ENCODE measurements at regions of chr17 and their contacts with region 1.

Region 1: GRCh38 chr17:794876-795275 is 12.7 kb downstream of the MRM3 start:
- DNase-seq: no peak
- H3K4me3 ChIP-seq: peak overlapping the region; percentile 3; the same call in 1 of the 2 replicates
- CTCF ChIP-seq: peak; percentile 79

Region 2: DNA sequence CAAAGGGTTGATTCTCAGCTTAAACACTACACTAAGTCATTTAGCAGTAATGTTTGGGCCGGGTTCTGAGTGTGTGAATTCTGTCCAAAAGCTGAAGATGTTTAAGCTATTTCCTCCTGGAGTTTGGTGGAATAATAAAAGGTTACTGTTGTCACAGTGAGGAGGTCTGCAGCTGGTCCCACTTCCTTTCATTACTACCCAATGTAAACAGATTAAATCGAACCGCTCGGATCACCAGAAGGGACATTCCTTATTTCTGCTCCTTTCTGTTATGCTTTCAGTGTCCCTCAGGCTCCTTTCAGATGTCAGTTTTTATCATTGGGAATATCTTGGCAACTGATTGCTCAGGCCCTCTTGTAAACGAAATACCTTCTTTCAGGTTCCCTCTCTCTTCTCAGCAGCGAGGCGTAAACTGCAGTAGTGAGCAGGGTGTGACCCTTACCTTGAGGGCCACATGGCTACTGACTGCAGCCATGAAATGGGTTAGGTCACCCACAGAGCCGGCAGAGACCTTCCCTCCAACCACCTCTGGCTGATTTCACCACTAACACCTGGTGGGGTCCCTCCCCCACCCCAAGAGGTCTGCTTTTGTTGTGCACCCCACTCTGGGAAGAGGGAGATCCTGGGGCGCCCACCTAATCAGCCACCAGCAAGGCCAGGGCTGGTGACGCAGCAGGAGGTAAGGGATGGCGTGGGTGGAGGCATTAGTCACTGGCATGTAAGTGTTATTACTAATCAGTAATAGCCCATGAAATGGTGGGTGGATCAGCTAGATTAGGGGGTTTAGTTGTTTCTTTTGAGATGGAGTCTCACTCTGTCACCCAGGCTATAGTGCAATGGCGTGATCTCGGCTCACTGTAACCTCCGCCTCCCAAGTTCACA is 197.9 kb before region 1 on chr17:
- CTCF ChIA-PET with region 1: no interaction called
- POLR2A ChIA-PET with region 1: no interaction called
- DNase-seq: no peak
- H3K4me3 ChIP-seq: no peak overlapping the region
- CTCF ChIP-seq: no peak

Region 3: GRCh38 chr17:781805-782731 is 12.8 kb before region 1 on chr17 and contains the starts of genes GLOD4 and MRM3:
- CTCF ChIA-PET with region 1: interaction called, 19 read pairs
- POLR2A ChIA-PET with region 1: no interaction called
- DNase-seq: no peak
- H3K4me3 ChIP-seq: peak within 1 kb of the TSS; percentile 98
- CTCF ChIP-seq: no peak

Region 4: GRCh38 chr17:823501-823902 is 28.6 kb after region 1 on chr17:
- CTCF ChIA-PET with region 1: no interaction called
- POLR2A ChIA-PET with region 1: no interaction called
- DNase-seq: no peak
- H3K4me3 ChIP-seq: no peak overlapping the region
- CTCF ChIP-seq: no peak